CD8-positive, alpha-beta T cell (primary cell): ENCODE measurements at regions of chr17 and their contacts with region 1.

Region 1: DNA sequence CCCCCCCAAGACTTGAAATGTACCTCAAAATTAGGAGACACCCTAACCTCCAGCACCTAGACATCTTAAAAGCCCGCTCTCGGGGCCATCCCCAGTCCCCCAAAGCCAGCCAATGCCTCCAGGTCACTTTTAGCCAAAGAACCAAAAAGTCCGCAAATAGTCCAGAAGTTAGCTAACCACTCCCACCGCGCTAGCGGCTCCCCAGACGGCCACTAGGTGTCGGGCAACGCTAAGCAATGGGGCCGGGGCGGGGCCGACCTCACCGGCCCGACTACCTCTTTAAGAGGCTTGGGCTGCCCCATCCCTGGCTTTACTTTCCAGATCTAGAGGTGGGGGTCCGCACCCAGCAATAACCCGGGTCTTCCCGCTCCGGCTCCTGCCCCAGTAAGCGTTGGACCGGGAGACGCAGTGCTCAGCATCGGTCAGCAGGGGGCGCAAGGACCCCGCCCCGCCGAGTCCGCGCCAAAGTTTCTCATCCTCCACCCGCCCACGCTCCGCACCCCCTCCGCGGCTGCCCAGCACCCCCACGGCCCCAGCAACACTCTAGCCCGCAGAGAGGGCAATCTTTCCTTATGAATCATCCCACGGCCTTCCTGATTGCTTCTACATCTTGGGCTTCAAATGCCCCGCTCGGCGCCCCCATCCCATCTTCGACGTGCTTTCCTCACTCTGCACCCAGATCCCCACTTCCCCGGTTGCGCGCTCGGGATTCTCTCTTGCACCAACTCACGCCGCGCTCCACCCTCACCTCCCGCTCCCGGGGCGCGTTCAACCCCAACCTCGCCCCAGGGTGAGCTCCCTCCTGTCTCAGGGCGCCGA is 765 bp downstream of the COL1A1 start:
- DNase-seq: peak; percentile 66 to 87 (median 80)
- ATAC-seq: peak; percentile 49
- H3K4me3 ChIP-seq: peak overlapping the region; percentile 47 to 49
- H3K4me3 Mint-ChIP-seq: peak overlapping the region; percentile 78
- H3K27ac ChIP-seq: no peak overlapping the region
- H3K27ac Mint-ChIP-seq: peak overlapping the region; percentile 11
- H3K4me1 ChIP-seq: peaks cover 21% of the 10 kb centered on the region
- H3K4me1 Mint-ChIP-seq: peaks cover 25% of the 10 kb centered on the region
- H3K27me3 ChIP-seq: peaks cover 12 to 20% of the 10 kb centered on the region in 2 experiments
- H3K27me3 Mint-ChIP-seq: peaks cover 42% of the 10 kb centered on the region
- CTCF ChIP-seq: peak; percentile 100

Region 2: DNA sequence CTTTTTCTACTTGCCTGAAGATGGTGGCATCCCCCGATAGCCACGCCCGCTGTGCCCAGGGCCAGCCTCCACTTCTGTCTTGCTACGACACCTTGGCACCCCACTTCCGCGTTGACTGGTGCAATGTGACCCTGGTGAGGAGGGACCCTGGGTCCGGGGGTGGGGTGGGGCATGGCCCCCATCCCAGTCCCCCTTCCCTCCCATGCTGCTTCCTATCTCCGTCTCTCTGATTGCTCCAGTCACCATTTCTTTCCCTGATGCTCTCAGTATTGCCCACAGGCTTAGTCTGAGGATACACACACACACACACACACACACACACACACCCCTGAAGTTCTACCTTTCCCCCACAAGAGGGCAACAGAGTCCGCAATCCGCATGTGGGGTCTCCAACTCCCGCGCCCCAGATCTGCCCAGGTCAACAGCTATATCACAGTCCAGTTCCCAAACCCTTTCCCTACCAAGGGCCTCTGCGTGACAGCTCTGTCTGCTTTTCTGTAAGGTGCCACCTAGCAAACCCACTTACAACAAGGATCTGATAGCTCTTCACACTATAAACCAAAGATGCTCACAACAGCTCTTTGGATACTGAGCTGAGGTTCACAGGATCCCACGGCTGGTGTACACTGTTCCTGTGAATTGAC is 31.4 kb before region 1 on chr17:
- CTCF ChIA-PET with region 1: interaction called, 7 read pairs
- POLR2A ChIA-PET with region 1: no interaction called
- intact Hi-C with region 1: loop called (anchors 1 kb)
- DNase-seq: peak; percentile 37 to 83 (median 70)
- ATAC-seq: peak; percentile 86
- H3K4me3 ChIP-seq: peak overlapping the region; percentile 28 to 32
- H3K4me3 Mint-ChIP-seq: peak overlapping the region; percentile 75
- H3K27ac ChIP-seq: peak overlapping the region; percentile 17 to 28
- H3K27ac Mint-ChIP-seq: peak overlapping the region; percentile 90
- H3K4me1 ChIP-seq: peaks cover 20% of the 10 kb centered on the region
- H3K4me1 Mint-ChIP-seq: peaks cover 10% of the 10 kb centered on the region
- H3K27me3 ChIP-seq: no peaks in the 10 kb centered on the region
- H3K27me3 Mint-ChIP-seq: peaks cover 3% of the 10 kb centered on the region
- CTCF ChIP-seq: peak; percentile 55

Region 3: DNA sequence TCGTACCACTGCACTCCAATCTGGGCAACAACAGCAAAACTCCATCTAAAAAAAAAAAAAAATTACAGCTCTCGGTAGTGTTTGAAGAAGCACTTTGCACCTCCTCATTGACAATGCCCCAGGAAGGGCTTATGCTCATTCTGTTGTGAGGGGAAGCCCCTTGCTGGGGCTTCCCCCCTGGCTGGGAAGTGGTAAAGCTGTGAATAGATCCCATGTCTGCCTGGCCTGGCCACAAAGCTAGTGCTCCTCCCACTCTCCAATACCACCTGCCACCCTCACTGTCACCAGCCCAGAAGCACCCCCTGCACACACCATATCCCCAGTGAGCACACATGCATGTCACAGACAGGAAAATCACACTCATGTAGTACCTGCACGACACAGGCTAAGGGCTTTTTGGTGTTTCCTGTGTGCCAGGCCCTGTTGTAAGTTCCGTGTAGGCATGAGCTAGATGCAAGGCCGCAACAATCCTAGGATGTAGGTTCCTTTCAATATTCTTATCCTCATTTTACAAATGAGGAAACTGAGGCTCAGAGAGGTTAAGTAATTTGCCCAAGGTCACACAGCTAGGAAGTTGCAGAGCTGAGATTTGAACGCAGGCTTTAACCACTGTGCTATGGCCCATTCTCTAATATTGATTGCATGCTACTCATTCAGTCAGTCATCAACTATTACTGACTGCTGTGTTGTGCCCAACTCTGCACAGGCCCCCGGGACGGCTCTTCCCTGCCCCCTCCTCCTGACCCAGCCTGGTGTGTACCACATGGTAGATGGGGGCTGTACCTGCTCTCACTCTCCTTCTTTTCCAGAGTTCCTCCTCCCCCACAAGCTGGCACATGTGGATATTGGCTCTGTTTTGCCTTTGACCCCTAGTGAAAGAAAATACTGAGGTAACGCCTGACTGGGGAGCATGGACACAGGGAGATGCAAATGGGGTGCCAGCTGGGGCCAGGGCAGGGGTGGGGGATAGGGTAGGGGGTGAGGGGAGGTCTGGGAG is 12.7 kb after region 1 on chr17:
- CTCF ChIA-PET with region 1: interaction called, 64 read pairs
- POLR2A ChIA-PET with region 1: no interaction called
- intact Hi-C with region 1: no loop called
- DNase-seq: peak in 8 of 9 experiments; percentile 4 to 82 (median 50)
- ATAC-seq: peak; percentile 97
- H3K4me3 ChIP-seq: no peak overlapping the region
- H3K4me3 Mint-ChIP-seq: no peak overlapping the region
- H3K27ac ChIP-seq: no peak overlapping the region
- H3K27ac Mint-ChIP-seq: no peak overlapping the region
- H3K4me1 ChIP-seq: peaks cover 9% of the 10 kb centered on the region
- H3K4me1 Mint-ChIP-seq: peaks cover 7% of the 10 kb centered on the region
- H3K27me3 ChIP-seq: peaks cover 0 to 2% of the 10 kb centered on the region in 2 experiments
- H3K27me3 Mint-ChIP-seq: peaks cover 15% of the 10 kb centered on the region
- CTCF ChIP-seq: no peak